Posterior vena cava (tissue), 2 donors: ENCODE measurements at regions of chr3 and their contacts with region 1.

Region 1: DNA sequence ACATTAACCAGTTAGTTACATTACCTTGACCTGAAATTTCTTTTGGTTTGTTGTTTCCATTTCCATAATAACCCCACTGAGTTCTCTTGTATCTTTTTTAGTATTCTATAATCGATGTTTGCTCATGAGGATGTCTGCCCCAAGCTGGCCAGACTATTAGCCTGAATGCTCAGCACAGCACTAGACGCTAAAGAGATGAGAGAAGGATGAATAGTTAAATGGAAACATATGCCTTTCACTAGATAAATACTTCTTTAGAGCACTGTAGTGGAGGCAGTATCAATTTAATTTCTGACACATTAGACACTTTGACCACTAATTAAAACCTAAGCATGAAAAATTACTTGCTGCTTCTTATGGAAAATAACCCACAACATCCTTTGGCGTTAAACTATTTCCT is 654.9 kb upstream of the KCNMB2 start:
- DNase-seq: no peak

Region 2: GRCh38 chr3:177547711-177548350 is 333.5 kb before region 1 on chr3:
- intact Hi-C with region 1: no loop called
- DNase-seq: no peak

Region 3: GRCh38 chr3:177960014-177960413 is 78.7 kb after region 1 on chr3:
- intact Hi-C with region 1: loop called in 1 of 2 experiments (anchors 2 kb)
- DNase-seq: no peak

Region 4: DNA sequence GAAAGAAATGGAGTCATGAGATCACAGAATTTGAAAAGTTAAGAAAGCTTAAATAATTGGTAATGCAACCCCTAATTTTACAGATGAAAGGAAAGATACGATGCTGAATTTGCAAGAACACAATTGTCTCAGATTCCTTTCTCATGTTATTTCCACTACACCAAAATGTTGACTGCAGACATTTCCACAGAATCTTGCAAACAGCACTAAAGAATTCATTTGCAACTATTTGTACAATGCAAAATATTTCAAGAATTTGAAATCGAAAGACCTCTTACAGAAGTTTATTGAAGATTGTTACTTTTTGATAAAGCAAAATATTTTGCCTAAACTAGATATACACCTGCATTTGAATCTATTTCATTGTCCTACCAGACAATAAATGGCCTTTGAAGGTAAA is 460.8 kb after region 1 on chr3:
- intact Hi-C with region 1: no loop called
- DNase-seq: no peak